A549 (cell line): ENCODE measurements at regions of chr17 and their contacts with region 1.

Region 1: DNA sequence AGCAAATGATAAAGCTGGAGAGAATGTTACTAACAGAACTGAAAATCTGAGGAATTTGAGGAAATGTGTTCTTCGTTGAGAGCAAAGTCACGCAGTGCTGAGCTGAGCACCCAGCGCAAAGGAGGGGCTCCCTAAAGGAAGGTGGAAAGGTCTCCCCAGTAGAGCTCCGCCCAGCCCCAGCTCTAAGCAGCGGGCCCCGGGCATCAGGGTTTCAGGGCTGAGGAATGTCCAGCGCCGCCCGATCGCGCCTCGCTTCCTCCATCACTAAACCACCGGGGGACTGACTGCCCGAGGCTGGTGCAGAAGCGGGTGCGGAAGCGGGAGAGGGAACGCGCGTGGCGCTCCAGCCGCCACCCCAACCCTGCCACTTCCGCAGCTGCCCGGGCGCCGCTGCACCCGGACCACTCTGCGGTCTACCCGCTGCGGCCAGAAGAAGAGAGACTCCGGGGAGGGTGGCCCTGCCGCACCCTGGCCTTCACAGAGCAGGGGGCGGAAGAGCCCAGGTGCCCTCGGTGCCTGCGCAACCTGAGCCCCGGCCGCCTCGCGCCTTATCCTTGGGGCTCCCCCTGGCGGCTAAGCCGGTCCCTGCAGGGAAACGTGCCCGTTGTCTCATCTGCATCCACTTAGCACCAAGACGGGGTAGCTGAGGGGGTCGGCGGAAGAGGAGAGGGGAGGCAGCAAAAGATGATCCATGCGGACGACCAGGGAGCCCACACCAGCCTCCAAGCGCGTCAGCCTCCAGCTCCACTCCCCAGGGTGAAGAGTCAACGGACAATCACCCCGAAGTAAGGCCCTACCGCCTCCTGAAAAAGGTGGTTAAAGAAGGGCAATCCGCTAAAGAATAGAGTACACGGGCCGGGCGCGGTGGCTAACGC is 12.4 kb upstream of the GUCY2D start:
- DNase-seq: peak; percentile 88 to 97
- ATAC-seq: peak; percentile 90 to 93
- H3K4me3 ChIP-seq: peak overlapping the region; percentile 58
- H3K27ac ChIP-seq: peak overlapping the region; percentile 83 to 93
- H3K4me1 ChIP-seq: no peaks in the 10 kb centered on the region
- CTCF ChIP-seq: peak; percentile 97
- EP300 ChIP-seq: no peak
- POLR2A ChIP-seq: peak; percentile 76
- RAD21 ChIP-seq: peak; percentile 70 to 76

Region 2: GRCh38 chr17:7834962-7835813 is 154.8 kb before region 1 on chr17:
- CTCF ChIA-PET with region 1: interaction called, 15 read pairs
- POLR2A ChIA-PET with region 1: no interaction called
- DNase-seq: peak; percentile 99
- ATAC-seq: peak; percentile 58 to 73
- H3K4me3 ChIP-seq: peak overlapping the region; percentile 60
- H3K27ac ChIP-seq: peak overlapping the region; percentile 82 to 89
- H3K4me1 ChIP-seq: peaks cover 36% of the 10 kb centered on the region
- CTCF ChIP-seq: peak; percentile 87
- EP300 ChIP-seq: no peak
- POLR2A ChIP-seq: peak; percentile 39
- RAD21 ChIP-seq: peak; percentile 83 to 88

Region 3: GRCh38 chr17:7862692-7863437 is 127.2 kb before region 1 on chr17:
- CTCF ChIA-PET with region 1: interaction called, 248 read pairs
- POLR2A ChIA-PET with region 1: interaction called, 9 read pairs
- DNase-seq: peak; percentile 65 to 66
- ATAC-seq: no peak
- H3K4me3 ChIP-seq: no peak overlapping the region
- H3K27ac ChIP-seq: no peak overlapping the region
- H3K4me1 ChIP-seq: peaks cover 15% of the 10 kb centered on the region
- CTCF ChIP-seq: peak; percentile 96
- EP300 ChIP-seq: no peak
- POLR2A ChIP-seq: no peak
- RAD21 ChIP-seq: peak; percentile 94 to 97

Region 4: GRCh38 chr17:7915611-7916382 is 74.2 kb before region 1 on chr17 and contains the start of gene RNF227:
- CTCF ChIA-PET with region 1: interaction called, 372 read pairs
- POLR2A ChIA-PET with region 1: interaction called, 11 read pairs
- DNase-seq: peak; percentile 62 to 94
- ATAC-seq: peak; percentile 77 to 80
- H3K4me3 ChIP-seq: peak within 1 kb of the TSS; percentile 48
- H3K27ac ChIP-seq: peak within 1 kb of the TSS; percentile 82 to 92
- H3K4me1 ChIP-seq: peaks cover 13% of the 10 kb centered on the region
- CTCF ChIP-seq: no peak
- EP300 ChIP-seq: no peak
- POLR2A ChIP-seq: peak; percentile 86
- RAD21 ChIP-seq: no peak
- polyA plus RNA-seq, gene RNF227: 2.1 and 2.4 TPM in 2 replicates

Region 5: DNA sequence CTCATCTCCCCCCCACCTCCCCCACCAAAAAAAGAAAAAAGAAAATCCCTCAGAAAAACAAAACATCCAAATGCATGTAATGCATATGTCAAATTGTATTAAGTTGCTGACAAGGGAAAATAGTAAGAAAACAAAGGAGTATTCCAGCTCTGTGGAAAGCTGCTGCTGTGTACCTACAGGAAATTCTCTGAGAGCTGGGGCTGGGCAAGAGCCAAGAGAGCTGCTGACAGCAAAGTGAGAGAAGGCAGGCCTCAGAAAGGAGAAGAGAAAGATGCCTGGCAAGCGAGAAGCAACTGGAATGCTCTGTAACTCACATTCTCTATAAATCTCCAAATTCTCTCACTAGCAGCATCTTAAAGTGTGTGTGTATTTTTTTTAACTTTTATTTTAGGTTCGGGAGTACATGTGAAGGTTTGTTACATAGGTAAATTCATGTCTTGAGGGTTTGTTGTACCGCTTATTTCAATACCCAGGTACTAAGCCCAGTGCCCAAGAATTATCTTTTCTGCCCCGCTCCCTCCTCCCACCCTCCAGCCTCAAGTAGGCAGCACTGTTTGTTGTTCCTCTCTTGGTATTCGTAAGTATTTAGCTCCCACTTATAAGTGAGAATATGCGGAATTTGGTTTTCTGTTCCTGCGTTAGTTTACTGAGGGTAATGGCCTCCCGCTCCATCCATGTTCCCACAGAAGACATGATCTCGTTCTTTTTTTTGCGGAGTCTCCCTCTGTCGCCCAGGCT is 33.6 kb before region 1 on chr17:
- CTCF ChIA-PET with region 1: interaction called, 470 read pairs
- POLR2A ChIA-PET with region 1: no interaction called
- DNase-seq: no peak
- ATAC-seq: no peak
- H3K4me3 ChIP-seq: no peak overlapping the region
- H3K27ac ChIP-seq: no peak overlapping the region
- H3K4me1 ChIP-seq: no peaks in the 10 kb centered on the region
- CTCF ChIP-seq: no peak
- EP300 ChIP-seq: no peak
- POLR2A ChIP-seq: no peak
- RAD21 ChIP-seq: no peak

Region 6: GRCh38 chr17:8016632-8017478 is 26.8 kb after region 1 on chr17:
- CTCF ChIA-PET with region 1: interaction called, 34 read pairs
- POLR2A ChIA-PET with region 1: no interaction called
- DNase-seq: peak; percentile 62 to 66
- ATAC-seq: peak; percentile 76 to 92
- H3K4me3 ChIP-seq: peak overlapping the region; percentile 47
- H3K27ac ChIP-seq: peak overlapping the region; percentile 62 to 70; a peak in 5 of 6 replicates
- H3K4me1 ChIP-seq: peaks cover 5% of the 10 kb centered on the region; the same call in 1 of the 3 replicates
- CTCF ChIP-seq: peak; percentile 89
- EP300 ChIP-seq: no peak
- POLR2A ChIP-seq: no peak
- RAD21 ChIP-seq: peak; percentile 72 to 77

Region 7: DNA sequence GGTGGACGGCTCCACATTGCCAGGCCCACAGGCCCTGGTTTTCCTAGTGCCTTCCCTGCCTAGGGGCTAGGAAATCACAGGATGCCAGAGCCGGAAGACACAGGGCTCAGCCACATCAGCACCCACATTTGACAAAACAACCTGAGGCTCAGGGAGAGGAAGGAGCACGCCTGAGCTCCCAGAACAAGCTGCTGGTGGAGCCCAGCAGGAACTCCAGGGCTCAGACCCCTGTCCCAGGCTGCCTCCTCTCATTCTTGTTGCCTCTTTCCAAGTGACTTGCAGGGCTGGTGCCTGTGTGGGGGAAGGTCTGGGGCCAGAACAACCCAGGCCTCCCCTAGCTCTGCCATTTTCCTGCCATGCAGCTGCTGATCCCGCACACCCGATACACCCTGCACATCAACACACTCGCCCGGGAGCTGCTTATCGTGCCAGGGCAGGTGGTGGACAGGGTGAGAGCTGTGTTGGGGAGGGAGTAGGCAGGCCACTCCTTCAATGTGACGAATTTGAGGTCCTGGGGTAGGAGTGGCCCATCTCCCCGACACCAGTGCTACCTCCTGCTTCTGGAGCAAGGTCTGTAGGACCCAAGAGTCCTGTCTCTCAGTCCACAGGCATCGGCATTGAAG is 56.4 kb after region 1 on chr17:
- CTCF ChIA-PET with region 1: interaction called, 54 read pairs
- POLR2A ChIA-PET with region 1: no interaction called
- DNase-seq: no peak
- ATAC-seq: no peak
- H3K4me3 ChIP-seq: no peak overlapping the region
- H3K27ac ChIP-seq: no peak overlapping the region
- H3K4me1 ChIP-seq: no peaks in the 10 kb centered on the region
- CTCF ChIP-seq: no peak
- EP300 ChIP-seq: no peak
- POLR2A ChIP-seq: no peak
- RAD21 ChIP-seq: no peak